ENCODE measurements at regions of chr3 and their contacts with region 1.

Region 1: GRCh38 chr3:9352917-9353752 is 9.7 kb upstream of the THUMPD3 start:
- DNase-seq: peak; percentile 74
- H3K4me3 Mint-ChIP-seq: no peak overlapping the region
- H3K27ac Mint-ChIP-seq: no peak overlapping the region
- H3K4me1 Mint-ChIP-seq: peaks cover 15% of the 10 kb centered on the region
- H3K27me3 Mint-ChIP-seq: no peaks in the 10 kb centered on the region

Region 2: DNA sequence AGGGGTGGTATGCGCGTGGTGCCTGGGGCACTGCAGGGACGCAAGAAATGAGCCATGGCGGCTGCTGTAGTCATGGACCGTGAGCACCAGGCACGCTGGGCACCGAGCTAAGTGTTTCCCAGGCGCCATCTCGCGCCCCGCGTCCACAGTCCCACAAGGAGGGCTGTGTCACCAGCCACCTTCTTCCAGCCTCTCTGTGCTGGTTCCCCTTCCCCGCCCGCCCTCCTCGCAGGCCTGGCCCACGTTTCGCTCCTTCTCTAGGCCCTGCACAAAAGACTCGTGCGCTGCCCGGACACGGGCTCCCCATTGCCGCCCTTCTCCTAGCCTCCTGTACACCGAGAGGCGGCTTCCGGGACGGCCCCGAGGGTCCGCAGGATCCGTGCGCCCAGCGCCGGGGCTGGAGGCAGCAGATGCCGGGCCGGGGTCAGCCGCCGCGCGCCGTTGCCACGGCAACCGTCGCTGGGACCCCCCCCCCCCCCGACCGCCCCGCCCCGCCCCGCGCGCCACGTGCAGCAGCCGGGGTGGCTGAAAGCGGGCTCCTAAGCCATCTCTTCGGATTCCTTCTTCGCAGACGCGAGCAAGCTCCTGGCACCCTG is 217.1 kb before region 1 on chr3:
- CTCF ChIA-PET with region 1: no interaction called
- DNase-seq: peak; percentile 29
- H3K4me3 Mint-ChIP-seq: no peak overlapping the region
- H3K27ac Mint-ChIP-seq: no peak overlapping the region
- H3K4me1 Mint-ChIP-seq: no peaks in the 10 kb centered on the region
- H3K27me3 Mint-ChIP-seq: peaks cover 50% of the 10 kb centered on the region

Region 3: DNA sequence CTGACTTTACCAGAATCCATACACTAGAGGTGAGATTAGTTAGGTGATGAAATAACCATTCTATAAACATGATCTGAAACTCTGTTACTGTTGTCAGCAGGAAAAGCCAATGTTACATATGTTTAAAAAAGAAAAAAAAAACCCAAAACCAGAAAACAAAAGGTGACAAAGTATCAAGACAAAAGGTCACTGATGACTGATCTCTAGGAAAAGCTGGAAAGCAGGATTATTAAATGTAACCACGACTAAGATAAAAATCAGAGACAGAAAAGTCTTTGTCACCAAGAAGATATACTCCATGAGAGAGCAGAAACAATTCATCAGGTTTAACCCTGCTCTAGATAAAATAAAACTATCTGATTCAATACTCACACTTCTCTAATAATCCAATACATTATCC is 38.9 kb after region 1 on chr3:
- CTCF ChIA-PET with region 1: interaction called, 13 read pairs
- DNase-seq: no peak
- H3K4me3 Mint-ChIP-seq: no peak overlapping the region
- H3K27ac Mint-ChIP-seq: peak overlapping the region; percentile 34
- H3K4me1 Mint-ChIP-seq: peaks cover 56% of the 10 kb centered on the region
- H3K27me3 Mint-ChIP-seq: peaks cover 1% of the 10 kb centered on the region

Region 4: DNA sequence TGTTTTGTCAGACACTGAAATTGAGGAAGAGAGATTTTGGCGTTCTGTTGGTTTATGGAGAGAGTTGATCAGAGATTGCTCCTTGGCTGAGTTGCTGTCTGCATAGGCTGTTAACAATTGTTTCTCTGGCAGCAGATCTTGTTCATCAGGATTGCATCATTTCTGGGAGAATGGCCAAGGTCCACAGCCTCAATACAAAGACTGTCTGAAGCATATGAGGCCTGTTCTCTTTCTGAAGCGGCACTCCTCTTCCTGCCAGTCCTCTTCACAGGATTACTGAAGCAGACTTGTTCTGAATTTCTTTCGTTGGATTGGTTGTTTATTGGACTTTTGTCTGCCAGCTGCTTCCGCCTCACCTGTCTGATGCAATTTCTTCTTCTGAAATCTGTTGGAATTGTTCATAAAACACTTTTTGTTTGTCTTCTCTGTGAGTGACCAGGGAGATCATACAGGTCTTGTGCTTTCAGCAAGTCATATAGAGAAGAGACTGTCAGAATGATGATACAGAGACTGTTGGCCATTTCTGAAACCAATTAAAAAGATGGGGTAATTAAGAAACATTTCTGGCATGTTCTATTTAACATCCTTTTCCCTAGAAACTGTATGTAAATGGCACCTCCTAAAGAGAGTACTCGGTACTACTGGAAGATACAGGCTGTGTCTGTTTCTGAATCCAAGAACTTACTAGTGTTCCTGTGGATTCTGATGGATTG is 69.7 kb after region 1 on chr3:
- CTCF ChIA-PET with region 1: interaction called, 11 read pairs
- DNase-seq: no peak
- H3K4me3 Mint-ChIP-seq: no peak overlapping the region
- H3K27ac Mint-ChIP-seq: peak overlapping the region; percentile 35
- H3K4me1 Mint-ChIP-seq: peaks cover 20% of the 10 kb centered on the region
- H3K27me3 Mint-ChIP-seq: no peaks in the 10 kb centered on the region

Region 5: GRCh38 chr3:9497821-9498565 is 144.9 kb after region 1 on chr3:
- CTCF ChIA-PET with region 1: interaction called, 29 read pairs
- DNase-seq: no peak
- H3K4me3 Mint-ChIP-seq: no peak overlapping the region
- H3K27ac Mint-ChIP-seq: no peak overlapping the region
- H3K4me1 Mint-ChIP-seq: peaks cover 2% of the 10 kb centered on the region
- H3K27me3 Mint-ChIP-seq: peaks cover 43% of the 10 kb centered on the region

Region 6: DNA sequence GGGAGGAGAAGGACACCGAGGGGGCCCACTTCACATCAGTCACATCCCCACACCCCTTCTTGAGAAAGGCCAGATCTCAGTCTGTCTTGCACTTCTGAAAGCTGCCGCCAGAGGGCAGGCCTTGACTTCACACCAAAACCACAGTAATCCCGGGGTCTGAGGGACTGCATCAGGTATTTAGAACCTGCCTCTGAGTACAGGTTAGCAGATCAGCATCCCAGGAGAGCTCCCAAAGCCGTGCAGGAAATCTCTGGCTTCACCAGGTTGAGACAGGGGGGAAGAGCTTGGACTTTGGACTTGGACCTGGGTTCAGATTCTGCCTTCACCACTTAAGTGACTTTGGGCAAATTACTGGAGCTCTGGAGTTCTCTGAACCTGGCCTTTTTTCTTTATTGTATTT is 150.1 kb after region 1 on chr3:
- CTCF ChIA-PET with region 1: interaction called, 29 read pairs
- DNase-seq: peak; percentile 85
- H3K4me3 Mint-ChIP-seq: no peak overlapping the region
- H3K27ac Mint-ChIP-seq: no peak overlapping the region
- H3K4me1 Mint-ChIP-seq: peaks cover 2% of the 10 kb centered on the region
- H3K27me3 Mint-ChIP-seq: peaks cover 61% of the 10 kb centered on the region